BJ (cell line): ENCODE measurements at regions of chr2 and their contacts with region 1.

Region 1: DNA sequence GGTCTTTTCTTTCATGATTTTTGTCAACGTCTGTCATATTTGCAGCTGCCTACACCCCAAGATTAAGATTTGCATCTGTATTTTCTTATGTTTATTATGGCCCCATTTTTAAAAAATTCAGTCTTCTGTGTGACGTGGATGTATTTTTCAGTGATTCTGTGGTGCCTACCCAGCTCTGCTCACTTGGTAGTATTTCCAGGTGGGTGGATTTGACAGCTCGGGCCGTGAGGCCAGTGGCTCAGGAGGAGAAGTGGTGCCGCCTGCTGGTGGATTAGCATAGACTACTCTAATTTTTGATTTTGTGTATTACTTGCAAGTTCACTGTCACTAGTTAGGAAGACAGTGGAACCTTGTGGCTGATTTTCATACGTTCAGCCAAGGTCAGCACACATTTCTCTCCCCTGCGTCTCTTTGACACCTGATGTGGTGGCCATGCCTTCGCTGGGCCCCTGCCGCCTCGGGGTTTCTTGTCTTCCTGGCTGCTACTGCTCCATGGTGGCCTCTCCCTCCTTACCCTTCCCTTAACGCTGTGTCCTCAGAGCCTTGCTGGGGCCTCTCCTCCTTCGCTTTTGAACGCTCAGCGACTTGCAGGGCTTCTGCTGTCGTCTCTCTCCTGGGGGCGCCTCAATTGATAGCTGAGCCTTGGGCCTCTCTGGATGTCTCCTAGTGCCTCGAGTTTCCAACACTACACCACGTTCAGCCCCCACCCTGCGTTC is 89.3 kb downstream of the DGKD start:
- DNase-seq: no peak
- H3K4me3 ChIP-seq: no peak overlapping the region
- H3K27me3 ChIP-seq: no peaks in the 10 kb centered on the region
- CTCF ChIP-seq: peak; percentile 83

Region 2: GRCh38 chr2:233353769-233354499 is 89.7 kb before region 1 on chr2 and contains the start of gene DGKD:
- CTCF ChIA-PET with region 1: interaction called, 12 read pairs
- POLR2A ChIA-PET with region 1: no interaction called
- DNase-seq: no peak
- H3K4me3 ChIP-seq: peak within 1 kb of the TSS; percentile 69
- H3K27me3 ChIP-seq: peaks cover 1% of the 10 kb centered on the region; the same call in 1 of the 2 replicates
- CTCF ChIP-seq: peak; percentile 23; the same call in 1 of the 2 replicates
- polyA plus RNA-seq, gene DGKD: 4.2 and 8.5 TPM in 2 replicates

Region 3: DNA sequence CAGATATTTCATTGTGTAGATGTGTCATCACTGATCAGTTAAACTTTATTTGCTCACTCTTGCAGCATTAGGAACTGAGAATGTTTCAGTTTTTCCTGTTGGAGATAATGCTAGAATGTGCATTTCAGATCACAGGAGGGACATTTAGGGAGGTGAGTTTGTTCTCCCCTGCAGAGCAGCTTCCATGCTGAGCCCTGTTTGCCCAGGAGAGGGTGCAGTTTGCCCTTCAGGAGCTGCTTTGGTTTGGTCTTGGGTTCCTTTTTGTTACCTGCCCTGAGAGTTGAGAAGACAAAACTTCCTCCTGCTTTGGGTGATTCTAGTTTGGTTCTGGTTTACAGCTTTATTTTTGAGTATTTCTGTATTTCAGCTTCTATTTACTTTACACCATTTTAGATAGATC is 39.4 kb before region 1 on chr2:
- CTCF ChIA-PET with region 1: interaction called, 82 read pairs
- POLR2A ChIA-PET with region 1: no interaction called
- DNase-seq: no peak
- H3K4me3 ChIP-seq: no peak overlapping the region
- H3K27me3 ChIP-seq: no peaks in the 10 kb centered on the region
- CTCF ChIP-seq: peak; percentile 68

Region 4: GRCh38 chr2:233430081-233430480 is 13.5 kb before region 1 on chr2:
- CTCF ChIA-PET with region 1: interaction called, 14 read pairs
- POLR2A ChIA-PET with region 1: no interaction called
- DNase-seq: peak; percentile 69
- H3K4me3 ChIP-seq: no peak overlapping the region
- H3K27me3 ChIP-seq: no peaks in the 10 kb centered on the region
- CTCF ChIP-seq: no peak